ENCODE measurements at regions of chr6 and their contacts with region 1.

Region 1: DNA sequence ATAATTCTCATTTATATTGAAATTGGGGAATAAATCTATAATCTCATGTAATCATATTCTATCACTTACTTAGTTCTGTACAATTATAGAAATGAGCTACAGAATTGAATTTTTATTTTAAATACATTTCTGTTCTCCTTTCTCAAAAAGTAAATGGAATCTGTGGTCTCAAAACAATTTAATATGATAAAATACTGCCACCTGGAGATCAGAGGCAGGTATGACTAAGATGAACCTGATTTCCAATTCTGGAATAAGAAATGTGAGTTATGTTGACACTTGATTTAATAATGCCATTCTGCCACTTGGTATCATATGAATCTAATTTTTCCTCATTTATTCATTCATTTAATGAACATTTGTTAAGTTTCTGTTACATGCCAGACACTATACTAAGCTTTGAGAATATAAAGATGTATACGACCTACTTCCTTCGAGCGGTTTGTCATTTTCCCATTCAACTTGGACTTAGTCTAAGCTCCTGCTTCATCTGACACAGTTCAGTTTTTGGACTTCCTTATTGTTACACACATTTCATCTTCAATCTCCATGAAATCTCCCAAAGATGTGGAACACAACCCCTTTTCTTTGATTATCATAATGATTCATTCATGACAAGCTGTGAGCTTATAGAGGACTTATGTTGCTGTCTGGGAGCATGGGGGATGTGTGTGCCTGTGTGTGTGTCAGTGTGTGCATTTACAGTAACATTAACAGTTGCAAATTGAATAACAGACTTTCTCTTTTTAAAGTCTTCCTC is 7.5 kb upstream of the CCDC28A start:
- DNase-seq: no peak
- ATAC-seq: no peak

Region 2: DNA sequence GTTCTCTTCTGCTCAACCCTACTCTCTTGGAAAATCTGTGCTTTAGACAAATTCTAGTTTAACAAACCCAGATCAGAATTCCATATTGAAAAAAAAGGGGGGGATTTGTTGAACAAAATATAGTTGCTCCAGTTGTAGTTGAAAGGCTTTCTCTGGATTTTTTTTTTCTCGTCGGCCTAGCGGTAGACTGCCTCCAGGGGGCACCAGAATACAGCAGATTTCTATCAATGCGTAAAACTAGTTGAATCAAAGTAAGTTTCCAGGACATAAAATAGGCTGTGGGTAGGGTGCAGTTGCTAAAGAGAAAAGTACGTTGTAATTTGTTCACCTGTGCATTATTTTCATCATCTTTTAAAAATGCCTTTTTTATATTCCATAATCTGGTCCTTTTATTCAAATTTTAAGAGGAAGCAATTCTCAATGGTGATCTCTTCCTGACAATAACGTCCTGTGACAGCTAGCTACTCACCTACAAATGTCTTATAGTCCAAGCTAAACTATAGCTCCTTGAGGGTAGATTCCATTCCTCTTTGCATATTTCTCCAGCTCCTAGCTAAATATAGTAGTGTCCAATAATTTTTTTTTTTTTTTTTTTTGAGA is 764.2 kb before region 1 on chr6:
- intact Hi-C with region 1: loop called (anchors 10 kb)
- DNase-seq: no peak
- ATAC-seq: peak; percentile 42

Region 3: DNA sequence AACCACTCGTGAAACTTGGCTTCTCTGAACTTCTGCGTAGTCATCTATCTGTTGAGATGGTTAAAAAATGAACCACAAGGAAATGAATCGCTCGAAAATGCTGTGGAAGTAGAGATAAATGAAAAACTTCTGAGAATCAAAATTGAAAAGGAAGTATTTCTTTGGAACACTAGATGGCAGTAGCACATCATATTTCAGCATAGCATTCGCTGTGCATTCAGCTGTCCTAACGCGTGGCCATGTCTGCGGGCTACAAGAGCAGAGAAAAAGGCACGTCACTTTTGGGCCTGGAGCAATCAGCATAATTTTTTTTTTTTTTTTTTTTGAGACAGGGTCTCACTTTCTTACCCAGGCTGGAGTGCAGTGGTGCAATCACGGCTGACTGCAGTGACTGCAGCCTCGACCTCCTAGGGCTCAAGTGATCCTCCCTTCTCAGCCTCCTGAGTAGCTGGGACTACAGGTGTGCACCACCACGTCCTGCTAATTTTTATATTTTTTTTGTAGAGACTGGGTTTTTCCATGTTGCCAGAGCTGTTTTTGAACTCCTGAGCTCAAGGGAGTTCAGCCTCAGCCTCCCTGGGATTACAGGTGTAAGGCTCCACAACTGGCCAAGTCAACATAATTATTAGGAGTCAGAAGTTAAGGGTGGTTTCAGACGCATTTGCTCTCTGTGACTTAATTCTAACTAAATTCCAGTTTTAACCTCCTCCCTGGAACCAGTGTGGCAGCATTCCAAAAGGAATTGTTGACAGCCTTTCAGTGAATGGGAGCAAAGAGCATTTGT is 650.0 kb before region 1 on chr6:
- intact Hi-C with region 1: loop called (anchors 5 kb)
- DNase-seq: peak; percentile 68
- ATAC-seq: peak; percentile 83

Region 4: DNA sequence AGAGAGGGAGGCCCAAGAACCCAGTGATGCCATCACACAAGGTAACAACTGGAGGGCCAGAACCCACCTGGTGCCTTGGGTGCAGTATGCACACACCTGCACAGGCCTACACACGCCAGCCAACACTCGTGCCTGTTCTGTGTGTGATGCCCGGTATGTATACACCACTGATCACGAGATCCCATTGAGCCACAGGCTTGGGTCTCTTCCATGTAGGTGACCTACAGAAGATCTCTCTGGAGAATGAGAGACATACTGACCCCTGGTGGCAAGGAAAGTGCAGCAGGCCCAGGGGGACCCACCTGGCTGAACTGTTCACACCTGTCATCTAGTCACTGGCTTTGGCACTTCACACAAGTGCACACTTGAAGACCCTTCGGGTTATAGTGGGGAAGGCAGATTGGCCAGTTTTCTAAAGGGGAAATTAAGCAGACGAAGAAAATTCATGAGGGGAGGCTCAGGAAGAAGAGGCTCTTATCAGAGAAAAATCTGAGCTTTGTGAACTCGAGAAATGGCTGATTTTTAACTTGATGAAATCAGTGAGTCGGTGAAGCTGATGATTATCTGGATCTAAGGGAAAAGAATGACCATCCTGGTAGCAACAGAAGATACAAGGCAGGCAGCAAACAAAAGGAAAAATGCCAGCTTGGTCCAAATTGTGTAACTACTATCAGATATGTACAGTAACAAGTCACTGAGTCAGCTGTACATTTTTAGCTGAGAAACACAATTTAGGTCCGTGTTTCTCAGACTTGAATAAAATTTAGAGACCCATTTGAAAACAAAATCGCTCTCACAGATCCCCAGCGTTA is 478.7 kb before region 1 on chr6:
- intact Hi-C with region 1: loop called (anchors 10 kb)
- DNase-seq: no peak
- ATAC-seq: no peak

Region 5: GRCh38 chr6:138428944-138429598 is 337.0 kb before region 1 on chr6:
- intact Hi-C with region 1: loop called (anchors 10 kb)
- DNase-seq: no peak
- ATAC-seq: peak; percentile 30

Measured in Right ventricle myocardium inferior (tissue), 1 donor.